Activated CD8-positive, alpha-beta memory T cell treated with anti-CD3 and anti-CD28 coated beads, Interleukin-2, amount 10 ng/mL, durations not matched to agents 7 days and 5 days (primary cell): ENCODE measurements at regions of chr3 and their contacts with region 1.

Region 1: GRCh38 chr3:120558771-120559241 is 37.3 kb upstream of the NDUFB4 start:
- DNase-seq: peak; percentile 90
- ATAC-seq: peak; percentile 93
- H3K4me3 Mint-ChIP-seq: peak overlapping the region; percentile 78
- H3K27ac Mint-ChIP-seq: peak overlapping the region; percentile 71
- H3K4me1 Mint-ChIP-seq: peaks cover 12% of the 10 kb centered on the region
- H3K27me3 Mint-ChIP-seq: peaks cover 7% of the 10 kb centered on the region

Region 2: GRCh38 chr3:120596116-120596852 is 37.5 kb after region 1 on chr3 and contains the start of gene NDUFB4:
- CTCF ChIA-PET with region 1: interaction called, 18 read pairs
- DNase-seq: peak; percentile 97
- ATAC-seq: peak; percentile 99
- H3K4me3 Mint-ChIP-seq: peak within 1 kb of the TSS; percentile 82
- H3K27ac Mint-ChIP-seq: peak within 1 kb of the TSS; percentile 92
- H3K4me1 Mint-ChIP-seq: peaks cover 10% of the 10 kb centered on the region
- H3K27me3 Mint-ChIP-seq: no peaks in the 10 kb centered on the region
- total RNA-seq, gene NDUFB4: 117 to 124 TPM

Region 3: GRCh38 chr3:120855665-120856437 is 297.0 kb after region 1 on chr3:
- CTCF ChIA-PET with region 1: no interaction called
- DNase-seq: no peak
- ATAC-seq: no peak
- H3K4me3 Mint-ChIP-seq: no peak overlapping the region
- H3K27ac Mint-ChIP-seq: no peak overlapping the region
- H3K4me1 Mint-ChIP-seq: no peaks in the 10 kb centered on the region
- H3K27me3 Mint-ChIP-seq: peaks cover 12% of the 10 kb centered on the region